ENCODE measurements at regions of chr2 and their contacts with region 1.

Region 1: DNA sequence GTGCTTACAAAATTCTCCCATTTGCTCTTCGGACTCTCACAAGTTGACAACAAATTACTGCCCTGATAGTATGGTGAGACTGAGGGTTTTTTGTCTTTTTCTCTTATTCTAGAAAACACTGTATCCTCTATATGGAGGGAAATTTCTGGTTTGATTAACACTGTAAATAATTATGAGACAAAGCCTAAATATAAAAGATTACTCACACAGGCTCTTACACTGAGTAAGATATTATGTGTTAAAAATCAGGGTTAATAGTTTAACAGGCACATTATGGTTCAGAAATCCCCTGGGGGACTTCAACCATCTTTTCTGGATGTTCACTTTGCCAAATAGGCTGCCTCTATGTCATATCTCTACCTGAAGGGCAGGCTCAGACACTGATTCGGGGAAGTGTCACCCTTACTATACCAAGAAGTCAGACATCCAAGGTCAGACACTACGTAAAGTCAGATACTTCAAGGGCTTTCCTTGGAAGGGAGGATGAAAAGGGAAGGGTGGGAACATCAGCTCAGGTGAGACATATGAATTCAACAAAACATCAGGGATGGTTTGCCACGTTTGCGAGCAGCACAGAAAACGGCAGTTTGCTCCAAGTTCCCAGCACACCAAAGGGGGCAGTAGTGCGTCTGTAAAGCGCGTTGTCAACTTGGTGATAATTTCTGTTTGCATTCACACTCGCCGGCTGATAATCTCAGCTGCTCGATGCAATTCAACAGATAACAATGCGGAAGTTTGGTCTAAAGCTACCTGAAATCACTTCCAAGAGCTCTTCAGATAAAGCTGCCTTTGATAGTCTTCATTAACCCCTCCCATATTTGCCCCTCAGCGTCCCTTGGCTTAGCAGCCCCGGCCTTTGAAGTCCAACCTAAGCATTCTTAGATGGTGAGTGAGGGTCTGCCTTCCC is 972 bp upstream of the RASGRP3 start:
- DNase-seq: peak; percentile 85
- H3K4me3 Mint-ChIP-seq: peak overlapping the region; percentile 80
- H3K27ac Mint-ChIP-seq: peak overlapping the region; percentile 86
- H3K4me1 Mint-ChIP-seq: peaks cover 33% of the 10 kb centered on the region
- H3K27me3 Mint-ChIP-seq: no peaks in the 10 kb centered on the region

Region 2: DNA sequence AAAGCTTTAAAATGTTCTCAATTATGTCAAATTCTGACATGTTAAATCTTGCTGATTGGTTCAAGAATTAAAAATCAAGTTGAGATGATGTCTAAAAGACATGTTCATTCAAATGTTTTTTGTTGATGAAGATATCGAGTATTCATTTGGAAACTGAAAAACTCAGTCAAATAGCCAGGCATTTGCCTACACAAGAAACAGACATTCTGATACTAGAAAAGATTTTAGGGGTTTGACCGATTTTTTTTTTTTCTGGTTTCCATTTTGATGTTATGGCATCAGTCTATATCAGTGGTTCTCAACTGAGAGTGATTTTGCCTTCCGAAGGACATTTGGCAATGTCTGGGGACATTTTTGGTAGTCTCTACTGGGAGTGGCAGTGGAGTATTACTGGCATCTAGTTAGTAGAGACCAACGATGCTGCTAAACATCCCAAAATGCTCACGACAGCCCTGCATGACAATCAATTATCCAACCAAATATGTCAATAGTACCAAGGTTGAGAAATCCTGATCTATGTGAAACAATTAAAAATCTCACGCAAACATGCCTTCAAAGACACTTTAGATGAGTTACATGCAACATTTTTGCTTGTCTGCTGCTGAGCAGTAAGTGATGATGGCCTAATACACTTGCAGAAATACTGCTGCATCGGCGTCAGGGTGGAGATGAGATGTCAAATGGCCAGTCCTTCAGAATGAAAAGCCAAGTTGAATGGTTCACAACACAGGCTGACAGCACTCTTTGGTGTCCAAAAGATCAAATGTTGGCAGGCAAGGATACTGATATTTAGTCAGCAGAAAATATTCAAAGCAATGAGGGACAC is 13.5 kb after region 1 on chr2:
- CTCF ChIA-PET with region 1: interaction called, 8 read pairs
- POLR2A ChIA-PET with region 1: interaction called, 5 read pairs
- intact Hi-C with region 1: loop called (anchors 1 kb)
- DNase-seq: no peak
- H3K4me3 Mint-ChIP-seq: no peak overlapping the region
- H3K27ac Mint-ChIP-seq: peak overlapping the region; percentile 66
- H3K4me1 Mint-ChIP-seq: peaks cover 37% of the 10 kb centered on the region
- H3K27me3 Mint-ChIP-seq: peaks cover 13% of the 10 kb centered on the region

Region 3: GRCh38 chr2:33497221-33497650 is 21.8 kb after region 1 on chr2:
- CTCF ChIA-PET with region 1: interaction called, 11 read pairs
- POLR2A ChIA-PET with region 1: interaction called, 5 read pairs
- intact Hi-C with region 1: loop called (anchors 1 kb)
- DNase-seq: no peak
- H3K4me3 Mint-ChIP-seq: no peak overlapping the region
- H3K27ac Mint-ChIP-seq: no peak overlapping the region
- H3K4me1 Mint-ChIP-seq: peaks cover 34% of the 10 kb centered on the region
- H3K27me3 Mint-ChIP-seq: no peaks in the 10 kb centered on the region

Region 4: GRCh38 chr2:33526132-33526531 is 50.7 kb after region 1 on chr2:
- CTCF ChIA-PET with region 1: no interaction called
- POLR2A ChIA-PET with region 1: no interaction called
- intact Hi-C with region 1: loop called (anchors 1 kb)
- DNase-seq: no peak
- H3K4me3 Mint-ChIP-seq: no peak overlapping the region
- H3K27ac Mint-ChIP-seq: no peak overlapping the region
- H3K4me1 Mint-ChIP-seq: peaks cover 7% of the 10 kb centered on the region
- H3K27me3 Mint-ChIP-seq: no peaks in the 10 kb centered on the region

Region 5: DNA sequence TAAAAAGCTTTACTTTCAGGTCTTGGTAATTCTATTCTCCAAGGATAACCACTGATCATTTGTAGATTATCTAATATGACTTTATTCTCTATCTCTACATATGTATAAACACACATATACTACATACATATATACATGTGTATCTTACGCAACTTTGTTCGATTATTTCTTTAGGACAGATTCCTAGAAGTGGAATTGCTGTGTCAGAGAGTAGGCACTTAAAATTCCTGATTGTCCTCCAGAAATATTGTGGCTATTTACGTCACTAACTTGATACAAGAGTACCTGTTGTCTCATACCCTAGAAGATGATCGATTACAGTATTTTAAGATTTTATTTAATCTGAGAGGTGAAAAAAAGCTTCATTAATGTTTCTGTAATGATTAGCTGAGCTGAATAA is 65.8 kb after region 1 on chr2:
- CTCF ChIA-PET with region 1: no interaction called
- POLR2A ChIA-PET with region 1: no interaction called
- intact Hi-C with region 1: no loop called
- DNase-seq: no peak
- H3K4me3 Mint-ChIP-seq: no peak overlapping the region
- H3K27ac Mint-ChIP-seq: no peak overlapping the region
- H3K4me1 Mint-ChIP-seq: no peaks in the 10 kb centered on the region
- H3K27me3 Mint-ChIP-seq: no peaks in the 10 kb centered on the region

Region 6: GRCh38 chr2:33599175-33599942 is 123.9 kb after region 1 on chr2 and contains the start of gene FAM98A:
- CTCF ChIA-PET with region 1: interaction called, 16 read pairs
- POLR2A ChIA-PET with region 1: interaction called, 12 read pairs
- intact Hi-C with region 1: loop called (anchors 1 kb)
- DNase-seq: peak; percentile 99
- H3K4me3 Mint-ChIP-seq: peak within 1 kb of the TSS; percentile 90
- H3K27ac Mint-ChIP-seq: peak within 1 kb of the TSS; percentile 82
- H3K4me1 Mint-ChIP-seq: peaks cover 22% of the 10 kb centered on the region
- H3K27me3 Mint-ChIP-seq: no peaks in the 10 kb centered on the region
- total RNA-seq, gene FAM98A: 46.7 to 46.8 TPM